PC-9 (cell line): ENCODE measurements at regions of chr9 and their contacts with region 1.

Region 1: GRCh38 chr9:14353222-14354056 is 39.5 kb upstream of the NFIB start:
- DNase-seq: peak; percentile 39 to 77
- H3K4me3 ChIP-seq: peak overlapping the region; percentile 29; the same call in 1 of the 2 replicates
- H3K27ac ChIP-seq: no peak overlapping the region
- H3K4me1 ChIP-seq: no peaks in the 10 kb centered on the region
- H3K27me3 ChIP-seq: no peaks in the 10 kb centered on the region
- CTCF ChIP-seq: peak; percentile 85

Region 2: DNA sequence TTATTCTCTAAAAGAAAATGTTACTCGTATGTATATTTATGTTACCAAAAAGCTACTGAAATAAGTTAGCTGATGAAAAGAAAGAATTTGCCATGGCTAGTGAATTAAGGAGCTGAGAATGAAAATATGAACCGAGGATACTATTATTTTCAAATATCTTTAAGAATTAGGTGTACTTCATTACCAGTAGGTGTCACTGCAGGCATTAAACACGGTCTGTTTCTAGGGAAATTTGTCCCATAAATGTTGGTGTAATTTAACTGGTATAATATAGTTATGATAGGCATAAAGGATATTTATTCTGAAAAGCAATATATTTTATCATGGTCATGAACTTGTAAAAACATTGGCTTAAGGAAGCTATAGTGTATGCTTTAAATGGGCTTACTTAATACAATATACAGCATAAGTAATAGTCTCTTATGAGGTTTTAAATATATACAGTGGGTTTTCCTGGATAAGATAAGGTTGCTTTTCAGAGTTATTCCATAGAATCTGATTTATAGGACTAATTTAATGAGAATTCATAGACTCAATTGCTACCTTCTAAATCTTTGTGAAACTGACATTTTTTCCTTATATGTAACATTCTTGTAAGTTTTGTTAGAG is 1001.6 kb before region 1 on chr9:
- CTCF ChIA-PET with region 1: no interaction called
- POLR2A ChIA-PET with region 1: no interaction called
- intact Hi-C with region 1: loop called (anchors 10 kb)
- DNase-seq: no peak
- H3K4me3 ChIP-seq: no peak overlapping the region
- H3K27ac ChIP-seq: no peak overlapping the region
- H3K4me1 ChIP-seq: no peaks in the 10 kb centered on the region
- H3K27me3 ChIP-seq: no peaks in the 10 kb centered on the region
- CTCF ChIP-seq: peak; percentile 63

Region 3: DNA sequence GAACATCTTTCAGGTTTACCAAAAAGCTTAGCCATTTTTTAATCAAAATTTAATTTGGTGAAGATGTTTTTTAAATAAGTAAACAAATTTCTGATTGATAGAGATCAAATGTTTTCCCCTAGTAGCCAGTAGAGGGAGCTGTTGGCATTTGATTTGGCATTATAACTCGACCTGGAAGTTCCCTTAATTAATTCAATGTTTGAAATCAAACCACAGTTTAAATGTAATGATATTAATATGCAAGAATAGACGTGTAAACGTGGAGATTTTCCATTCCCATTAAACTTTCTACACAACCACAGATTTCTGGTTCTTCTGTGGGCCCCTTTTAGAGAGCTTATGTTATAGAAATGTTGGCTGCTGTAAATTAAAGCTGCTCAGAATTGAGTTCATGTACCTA is 925.9 kb before region 1 on chr9:
- CTCF ChIA-PET with region 1: interaction called, 19 read pairs
- POLR2A ChIA-PET with region 1: no interaction called
- intact Hi-C with region 1: loop called (anchors 2 kb)
- DNase-seq: peak in 1 of 2 experiments; percentile 5
- H3K4me3 ChIP-seq: no peak overlapping the region
- H3K27ac ChIP-seq: no peak overlapping the region
- H3K4me1 ChIP-seq: no peaks in the 10 kb centered on the region
- H3K27me3 ChIP-seq: no peaks in the 10 kb centered on the region
- CTCF ChIP-seq: peak; percentile 80

Region 4: GRCh38 chr9:13734601-13735000 is 618.8 kb before region 1 on chr9:
- CTCF ChIA-PET with region 1: no interaction called
- POLR2A ChIA-PET with region 1: no interaction called
- intact Hi-C with region 1: loop called (anchors 10 kb)
- DNase-seq: no peak
- H3K4me3 ChIP-seq: no peak overlapping the region
- H3K27ac ChIP-seq: no peak overlapping the region
- H3K4me1 ChIP-seq: no peaks in the 10 kb centered on the region
- H3K27me3 ChIP-seq: no peaks in the 10 kb centered on the region
- CTCF ChIP-seq: no peak

Region 5: GRCh38 chr9:14258660-14259239 is 94.7 kb before region 1 on chr9:
- CTCF ChIA-PET with region 1: interaction called, 18 read pairs
- POLR2A ChIA-PET with region 1: no interaction called
- intact Hi-C with region 1: no loop called
- DNase-seq: peak in 1 of 2 experiments; percentile 61
- H3K4me3 ChIP-seq: no peak overlapping the region
- H3K27ac ChIP-seq: 0 out of 2 replicates have a peak overlapping the region, but pooled peaks have one; percentile 9
- H3K4me1 ChIP-seq: peaks cover 25% of the 10 kb centered on the region
- H3K27me3 ChIP-seq: no peaks in the 10 kb centered on the region
- CTCF ChIP-seq: no peak

Region 6: GRCh38 chr9:14314929-14315645 is 38.4 kb before region 1 on chr9:
- CTCF ChIA-PET with region 1: no interaction called
- POLR2A ChIA-PET with region 1: no interaction called
- intact Hi-C with region 1: no loop called
- DNase-seq: peak; percentile 57 to 89
- H3K4me3 ChIP-seq: peak overlapping the region; percentile 76
- H3K27ac ChIP-seq: peak overlapping the region; percentile 96
- H3K4me1 ChIP-seq: peaks cover 31% of the 10 kb centered on the region
- H3K27me3 ChIP-seq: no peaks in the 10 kb centered on the region
- CTCF ChIP-seq: no peak